ENCODE measurements at regions of chr1 and their contacts with region 1.

Region 1: DNA sequence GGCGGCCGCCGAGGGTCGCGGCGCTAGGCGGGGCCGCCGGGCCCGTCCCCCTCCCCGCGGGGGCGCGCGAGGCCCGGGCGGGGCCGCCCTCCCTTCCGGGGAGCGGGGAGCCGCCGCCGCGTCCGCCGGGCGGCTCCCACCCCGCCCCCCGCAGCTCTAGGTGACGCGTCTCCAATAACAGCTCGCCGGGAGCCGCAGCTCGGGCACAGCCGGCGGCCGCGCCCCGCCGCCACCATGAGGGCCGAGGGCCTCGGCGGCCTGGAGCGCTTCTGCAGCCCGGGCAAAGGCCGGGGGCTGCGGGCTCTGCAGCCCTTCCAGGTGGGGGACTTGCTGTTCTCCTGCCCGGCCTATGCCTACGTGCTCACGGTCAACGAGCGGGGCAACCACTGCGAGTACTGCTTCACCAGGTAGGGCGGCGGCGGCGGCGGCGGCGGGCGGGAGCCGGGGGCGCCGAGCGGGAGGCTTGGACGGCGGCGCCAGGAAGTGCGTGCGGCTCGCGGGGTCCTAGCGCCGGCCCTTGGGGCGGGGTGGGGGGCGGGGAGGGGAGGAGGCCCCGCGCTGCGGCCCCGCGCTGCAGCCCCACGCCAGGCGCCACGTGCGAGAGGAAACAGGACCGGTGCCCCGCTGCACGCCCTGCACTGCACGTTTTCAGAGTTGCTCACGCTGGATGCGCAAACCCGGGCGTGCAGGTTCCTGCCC is at the start of gene SMYD2:
- DNase-seq: peak; percentile 32 to 85 (median 68)
- ATAC-seq: peak; percentile 77
- H3K4me3 ChIP-seq: peak within 1 kb of the TSS; percentile 60 to 80
- H3K4me3 Mint-ChIP-seq: peak within 1 kb of the TSS; percentile 86
- H3K27ac ChIP-seq: peak within 1 kb of the TSS; percentile 72 to 83
- H3K27ac Mint-ChIP-seq: peak within 1 kb of the TSS; percentile 91
- H3K4me1 ChIP-seq: peaks cover 26% of the 10 kb centered on the region
- H3K4me1 Mint-ChIP-seq: peaks cover 57% of the 10 kb centered on the region
- H3K27me3 ChIP-seq: no peaks in the 10 kb centered on the region
- H3K27me3 Mint-ChIP-seq: no peaks in the 10 kb centered on the region
- CTCF ChIP-seq: no peak
- total RNA-seq, gene SMYD2: 12.9 to 14.1 TPM

Region 2: GRCh38 chr1:214224611-214225354 is 56.4 kb before region 1 on chr1:
- CTCF ChIA-PET with region 1: no interaction called
- POLR2A ChIA-PET with region 1: no interaction called
- intact Hi-C with region 1: no loop called
- DNase-seq: no peak
- ATAC-seq: no peak
- H3K4me3 ChIP-seq: no peak overlapping the region
- H3K4me3 Mint-ChIP-seq: no peak overlapping the region
- H3K27ac ChIP-seq: no peak overlapping the region
- H3K27ac Mint-ChIP-seq: no peak overlapping the region
- H3K4me1 ChIP-seq: no peaks in the 10 kb centered on the region
- H3K4me1 Mint-ChIP-seq: no peaks in the 10 kb centered on the region
- H3K27me3 ChIP-seq: peaks cover 0 to 3% of the 10 kb centered on the region in 2 experiments
- H3K27me3 Mint-ChIP-seq: peaks cover 28% of the 10 kb centered on the region
- CTCF ChIP-seq: no peak

Region 3: DNA sequence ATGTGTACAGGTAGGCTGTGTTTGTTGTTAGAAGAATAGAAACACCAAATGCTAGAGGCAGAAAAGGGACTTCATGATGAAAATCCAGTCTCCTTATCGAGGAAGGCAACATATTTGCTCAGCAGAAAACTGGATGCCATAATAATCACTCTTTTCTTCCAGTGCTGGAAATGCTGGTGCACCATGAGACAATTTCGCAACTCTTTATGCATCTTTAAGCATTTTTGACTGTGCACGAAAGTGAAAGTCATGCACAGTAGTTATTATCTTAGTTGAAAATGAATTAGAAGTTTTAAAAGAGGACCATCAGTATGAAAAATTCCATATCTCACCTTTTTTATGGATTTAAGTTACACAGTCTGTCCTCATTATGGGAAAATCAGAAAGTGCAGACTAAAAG is 28.8 kb after region 1 on chr1:
- CTCF ChIA-PET with region 1: interaction called, 3 read pairs
- POLR2A ChIA-PET with region 1: no interaction called
- intact Hi-C with region 1: loop called in 1 of 2 experiments (anchors 2 kb)
- DNase-seq: no peak
- ATAC-seq: no peak
- H3K4me3 ChIP-seq: peak overlapping the region in 1 of 2 experiments; percentile 6
- H3K4me3 Mint-ChIP-seq: peak overlapping the region; percentile 20
- H3K27ac ChIP-seq: no peak overlapping the region
- H3K27ac Mint-ChIP-seq: no peak overlapping the region
- H3K4me1 ChIP-seq: peaks cover 8% of the 10 kb centered on the region
- H3K4me1 Mint-ChIP-seq: peaks cover 38% of the 10 kb centered on the region
- H3K27me3 ChIP-seq: no peaks in the 10 kb centered on the region
- H3K27me3 Mint-ChIP-seq: no peaks in the 10 kb centered on the region
- CTCF ChIP-seq: no peak

Region 4: DNA sequence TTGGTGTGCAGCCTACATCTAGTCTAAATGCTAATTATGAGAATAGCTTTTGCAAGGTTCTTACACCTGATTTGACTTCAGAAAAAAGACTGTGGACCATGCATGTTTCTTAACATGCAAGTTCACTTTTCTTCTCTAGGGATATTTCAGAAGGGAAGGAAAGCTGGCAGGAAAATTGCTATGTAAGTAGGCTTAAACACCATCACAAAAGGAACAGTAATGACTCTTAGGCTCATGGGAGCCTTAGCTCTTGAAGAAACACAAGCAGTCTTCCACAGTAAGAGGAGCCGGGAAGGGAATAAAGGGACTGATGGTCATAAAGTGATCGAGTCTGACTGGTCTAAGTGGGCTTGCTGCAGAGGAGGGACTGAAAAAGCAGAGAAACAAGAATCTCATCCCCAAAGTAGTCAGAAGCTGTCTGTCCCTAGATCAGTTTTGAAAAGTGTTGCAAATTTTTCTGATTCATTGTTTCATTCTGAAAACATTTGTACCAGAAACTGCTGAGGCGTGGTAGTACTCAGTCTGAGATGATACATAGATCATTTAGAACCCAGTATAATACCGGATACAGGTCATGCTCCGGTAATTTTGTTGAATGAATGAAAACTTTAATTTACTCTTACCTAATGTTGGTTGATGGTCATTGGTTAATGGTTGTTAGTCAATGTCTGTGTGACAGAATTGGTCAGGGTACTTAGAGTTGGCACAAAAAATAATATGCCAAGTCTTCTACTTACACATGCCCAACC is 40.7 kb after region 1 on chr1:
- CTCF ChIA-PET with region 1: interaction called, 17 read pairs
- POLR2A ChIA-PET with region 1: no interaction called
- intact Hi-C with region 1: loop called in 1 of 2 experiments (anchors 2 kb)
- DNase-seq: no peak
- ATAC-seq: no peak
- H3K4me3 ChIP-seq: no peak overlapping the region
- H3K4me3 Mint-ChIP-seq: no peak overlapping the region
- H3K27ac ChIP-seq: no peak overlapping the region
- H3K27ac Mint-ChIP-seq: no peak overlapping the region
- H3K4me1 ChIP-seq: no peaks in the 10 kb centered on the region
- H3K4me1 Mint-ChIP-seq: no peaks in the 10 kb centered on the region
- H3K27me3 ChIP-seq: no peaks in the 10 kb centered on the region
- H3K27me3 Mint-ChIP-seq: no peaks in the 10 kb centered on the region
- CTCF ChIP-seq: no peak

Region 5: GRCh38 chr1:214427871-214428277 is 146.7 kb after region 1 on chr1:
- CTCF ChIA-PET with region 1: no interaction called
- POLR2A ChIA-PET with region 1: interaction called, 4 read pairs
- intact Hi-C with region 1: loop called in 1 of 2 experiments (anchors 2 kb)
- DNase-seq: peak; percentile 10 to 86 (median 54)
- ATAC-seq: peak; percentile 95
- H3K4me3 ChIP-seq: no peak overlapping the region
- H3K4me3 Mint-ChIP-seq: peak overlapping the region; percentile 42
- H3K27ac ChIP-seq: peak overlapping the region; percentile 2 to 44
- H3K27ac Mint-ChIP-seq: peak overlapping the region; percentile 88
- H3K4me1 ChIP-seq: peaks cover 23% of the 10 kb centered on the region
- H3K4me1 Mint-ChIP-seq: peaks cover 26% of the 10 kb centered on the region
- H3K27me3 ChIP-seq: no peaks in the 10 kb centered on the region
- H3K27me3 Mint-ChIP-seq: no peaks in the 10 kb centered on the region
- CTCF ChIP-seq: no peak

Region 6: DNA sequence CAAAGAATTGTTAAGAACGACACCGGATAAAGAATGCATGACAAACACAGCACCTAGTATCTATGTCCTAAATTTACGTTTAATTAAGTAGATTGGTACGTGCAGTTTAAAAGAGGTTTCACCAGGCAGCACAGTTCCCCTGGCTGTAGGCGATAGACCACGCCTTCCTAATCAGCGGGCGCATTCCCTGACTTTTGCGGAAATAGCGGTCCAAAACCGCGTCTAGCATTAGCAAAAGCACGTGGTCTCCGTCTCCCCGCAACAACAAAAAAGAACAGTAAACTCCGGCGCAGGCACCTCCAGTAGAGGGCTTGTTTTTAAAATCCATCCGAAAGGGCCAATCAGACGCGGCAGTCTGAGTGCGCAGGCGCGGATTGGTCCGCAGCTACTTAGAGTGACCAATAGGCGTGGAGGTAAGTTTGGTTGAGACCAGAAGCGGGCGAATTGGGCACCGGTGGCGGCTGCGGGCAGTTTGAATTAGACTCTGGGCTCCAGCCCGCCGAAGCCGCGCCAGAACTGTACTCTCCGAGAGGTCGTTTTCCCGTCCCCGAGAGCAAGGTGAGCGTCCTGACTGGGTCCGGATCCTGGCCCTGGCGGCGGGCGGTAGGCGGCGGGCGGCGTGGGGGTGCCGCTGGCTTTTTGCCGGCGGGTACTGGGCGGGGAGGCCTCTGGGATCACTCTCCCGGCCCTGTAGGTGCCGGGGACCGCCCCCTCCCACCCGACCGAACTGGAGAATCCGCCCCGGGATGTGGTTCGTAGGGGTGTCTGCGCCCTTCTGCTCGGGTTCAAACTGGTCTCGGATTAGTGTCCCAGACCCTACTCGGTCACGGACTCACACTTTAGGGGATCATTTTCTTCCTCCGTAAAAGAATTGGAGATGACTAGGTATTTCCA is 321.8 kb after region 1 on chr1 and contains the start of gene CENPF:
- CTCF ChIA-PET with region 1: no interaction called
- POLR2A ChIA-PET with region 1: no interaction called
- intact Hi-C with region 1: loop called (anchors 1 to 5 kb)
- DNase-seq: peak; percentile 85 to 97 (median 91)
- ATAC-seq: peak; percentile 98
- H3K4me3 ChIP-seq: peak within 1 kb of the TSS; percentile 78 to 90
- H3K4me3 Mint-ChIP-seq: peak within 1 kb of the TSS; percentile 91
- H3K27ac ChIP-seq: peak within 1 kb of the TSS; percentile 4 to 39
- H3K27ac Mint-ChIP-seq: peak within 1 kb of the TSS; percentile 56
- H3K4me1 ChIP-seq: peaks cover 7% of the 10 kb centered on the region
- H3K4me1 Mint-ChIP-seq: peaks cover 22% of the 10 kb centered on the region
- H3K27me3 ChIP-seq: no peaks in the 10 kb centered on the region
- H3K27me3 Mint-ChIP-seq: no peaks in the 10 kb centered on the region
- CTCF ChIP-seq: no peak
- total RNA-seq, gene CENPF: 1.5 to 2.0 TPM